ENCODE measurements at regions of chr6 and their contacts with region 1.

Region 1: GRCh38 chr6:143970456-143971218 is 37.4 kb downstream of the PLAGL1 start:
- DNase-seq: no peak
- ATAC-seq: no peak
- H3K4me3 ChIP-seq: no peak overlapping the region
- H3K27ac ChIP-seq: no peak overlapping the region
- H3K4me1 ChIP-seq: peaks cover 9% of the 10 kb centered on the region
- H3K27me3 ChIP-seq: peaks cover 4% of the 10 kb centered on the region
- CTCF ChIP-seq: no peak
- POLR2A ChIP-seq: no peak
- RAD21 ChIP-seq: no peak

Region 2: GRCh38 chr6:144008120-144008811 is 37.6 kb after region 1 on chr6 and contains the start of gene PLAGL1:
- CTCF ChIA-PET with region 1: no interaction called
- POLR2A ChIA-PET with region 1: no interaction called
- dilution Hi-C with region 1: no loop called
- in situ Hi-C with region 1: no loop called
- intact Hi-C with region 1: loop called (anchors 5 kb)
- DNase-seq: peak; percentile 55
- ATAC-seq: peak; percentile 91
- H3K4me3 ChIP-seq: peak within 1 kb of the TSS; percentile 69
- H3K27ac ChIP-seq: peak within 1 kb of the TSS; percentile 24
- H3K4me1 ChIP-seq: no peaks in the 10 kb centered on the region; the same call in 1 of the 2 replicates
- H3K27me3 ChIP-seq: no peaks in the 10 kb centered on the region
- CTCF ChIP-seq: no peak
- POLR2A ChIP-seq: peak; percentile 87
- RAD21 ChIP-seq: no peak
- total RNA-seq, gene PLAGL1: 15.3 and 23.3 TPM in 2 replicates

Region 3: DNA sequence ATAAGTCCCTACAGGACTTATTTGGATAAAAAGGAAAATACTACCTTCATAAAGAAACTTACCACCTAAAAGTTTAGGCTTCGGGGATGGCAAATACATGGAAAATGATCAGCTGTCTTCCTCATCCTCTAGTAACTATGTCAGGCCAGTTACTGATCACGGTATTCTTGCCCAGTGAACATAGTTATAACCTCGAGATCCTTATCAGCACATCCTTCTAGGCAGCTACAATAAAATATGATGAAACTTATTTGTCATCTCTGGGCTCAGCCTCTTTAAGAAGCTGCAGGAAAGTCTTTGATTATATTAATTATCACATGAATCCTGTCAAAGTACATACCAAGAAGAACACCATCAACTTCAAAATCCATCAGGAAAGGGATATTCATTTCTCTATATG is 83.0 kb after region 1 on chr6:
- CTCF ChIA-PET with region 1: no interaction called
- POLR2A ChIA-PET with region 1: no interaction called
- dilution Hi-C with region 1: no loop called
- in situ Hi-C with region 1: no loop called
- intact Hi-C with region 1: no loop called
- DNase-seq: no peak
- ATAC-seq: no peak
- H3K4me3 ChIP-seq: no peak overlapping the region
- H3K27ac ChIP-seq: no peak overlapping the region
- H3K4me1 ChIP-seq: no peaks in the 10 kb centered on the region
- H3K27me3 ChIP-seq: peaks cover 15% of the 10 kb centered on the region
- CTCF ChIP-seq: no peak
- POLR2A ChIP-seq: no peak
- RAD21 ChIP-seq: no peak

Measured in IMR-90 (cell line).